Heart right ventricle (tissue), 16 donors: ENCODE measurements at regions of chrX and their contacts with region 1.

Region 1: GRCh38 chrX:142095651-142096245 is 109.3 kb downstream of the MAGEC2 start:
- DNase-seq: no peak
- ATAC-seq: no peak
- H3K4me3 ChIP-seq: no peak overlapping the region
- H3K27ac ChIP-seq: no peak overlapping the region
- H3K4me1 ChIP-seq: no peaks in the 10 kb centered on the region
- H3K27me3 ChIP-seq: no peaks in the 10 kb centered on the region
- CTCF ChIP-seq: no peak

Region 2: DNA sequence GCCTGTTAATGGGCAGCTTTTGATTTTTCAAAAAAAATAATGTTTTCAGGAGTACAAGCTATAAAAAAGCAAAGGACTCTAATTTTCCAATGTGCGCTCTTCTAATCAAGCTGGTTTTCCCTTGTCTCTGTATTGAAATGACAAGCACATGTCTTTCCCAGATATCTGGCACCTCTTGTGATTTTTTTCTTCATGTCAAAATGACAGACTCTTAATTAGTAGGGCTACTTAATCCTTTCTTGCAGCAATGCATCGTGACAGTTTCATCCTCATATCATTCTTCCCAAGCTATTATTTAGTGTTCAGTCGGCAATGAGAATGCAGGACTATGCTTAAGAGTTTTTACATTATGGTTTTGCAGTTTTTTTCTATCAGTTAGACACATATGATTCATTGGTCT is 52.6 kb before region 1 on chrX:
- intact Hi-C with region 1: no loop called
- DNase-seq: no peak
- ATAC-seq: no peak
- H3K4me3 ChIP-seq: no peak overlapping the region
- H3K27ac ChIP-seq: no peak overlapping the region
- H3K4me1 ChIP-seq: no peaks in the 10 kb centered on the region
- H3K27me3 ChIP-seq: no peaks in the 10 kb centered on the region
- CTCF ChIP-seq: no peak

Region 3: DNA sequence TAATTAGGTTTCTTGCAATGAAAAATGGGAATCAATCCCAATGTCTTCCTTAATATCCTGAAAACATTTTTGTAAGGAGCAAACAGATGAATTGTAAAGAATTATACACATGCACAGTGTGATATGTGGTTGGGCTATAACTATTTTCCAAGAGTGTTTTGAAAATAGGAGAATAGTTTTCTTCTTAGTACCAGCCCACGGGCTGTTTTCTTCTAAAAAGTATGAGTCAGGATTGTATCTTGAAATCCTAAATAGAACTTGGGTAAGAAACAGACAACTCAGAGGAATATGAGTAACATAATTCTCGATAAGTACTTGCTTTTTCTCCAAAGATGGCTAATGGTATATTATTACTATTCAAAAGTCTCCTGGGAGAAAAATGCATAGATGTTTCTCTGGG is 27.4 kb before region 1 on chrX:
- intact Hi-C with region 1: no loop called
- DNase-seq: no peak
- ATAC-seq: no peak
- H3K4me3 ChIP-seq: no peak overlapping the region
- H3K27ac ChIP-seq: no peak overlapping the region
- H3K4me1 ChIP-seq: no peaks in the 10 kb centered on the region
- H3K27me3 ChIP-seq: no peaks in the 10 kb centered on the region
- CTCF ChIP-seq: no peak

Region 4: DNA sequence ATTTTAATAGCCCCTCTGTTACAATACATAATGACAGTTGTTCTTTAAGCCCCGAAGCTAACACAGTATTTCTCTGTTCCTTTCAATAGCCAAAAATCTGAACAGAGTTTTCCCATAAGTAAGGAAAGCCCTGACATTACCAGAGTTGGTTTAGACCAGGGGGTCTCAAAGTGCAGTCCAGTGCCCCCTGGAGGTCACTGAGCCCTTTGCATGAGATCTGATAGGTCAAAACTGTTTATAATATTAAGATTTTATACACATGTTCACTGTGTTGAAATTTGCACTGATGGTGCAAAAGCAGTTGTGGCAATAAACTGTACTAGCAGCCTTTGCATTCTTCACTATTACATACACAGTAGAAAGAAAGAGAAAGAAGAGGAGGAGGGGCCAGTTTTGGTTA is 1244.4 kb after region 1 on chrX:
- intact Hi-C with region 1: loop called in 1 of 10 experiments (anchors 5 kb)
- DNase-seq: no peak
- ATAC-seq: no peak
- H3K4me3 ChIP-seq: no peak overlapping the region
- H3K27ac ChIP-seq: no peak overlapping the region
- H3K4me1 ChIP-seq: no peaks in the 10 kb centered on the region
- H3K27me3 ChIP-seq: no peaks in the 10 kb centered on the region
- CTCF ChIP-seq: peak in 1 of 9 donors; percentile 11